ENCODE measurements at regions of chr4 and their contacts with region 1.

Region 1: GRCh38 chr4:140252742-140253555 is 99.0 kb upstream of the MAML3 start:
- DNase-seq: peak; percentile 36 to 70 (median 48)
- H3K4me3 ChIP-seq: peak overlapping the region; percentile 52 to 77 (median 70)
- H3K4me3 Mint-ChIP-seq: peak overlapping the region; percentile 65 to 80
- H3K27ac ChIP-seq: peak overlapping the region in 1 of 2 donors; percentile 74
- H3K27ac Mint-ChIP-seq: peak overlapping the region in 4 of 7 donors; percentile 20 to 81 (median 42)
- H3K4me1 ChIP-seq: peaks cover 22 to 28% of the 10 kb centered on the region in 2 donors
- H3K4me1 Mint-ChIP-seq: peaks cover 55% of the 10 kb centered on the region
- H3K27me3 ChIP-seq: no peaks in the 10 kb centered on the region
- H3K27me3 Mint-ChIP-seq: peaks cover 0 to 6% (median 2%) of the 10 kb centered on the region in 3 donors
- CTCF ChIP-seq: peak; percentile 98

Region 2: DNA sequence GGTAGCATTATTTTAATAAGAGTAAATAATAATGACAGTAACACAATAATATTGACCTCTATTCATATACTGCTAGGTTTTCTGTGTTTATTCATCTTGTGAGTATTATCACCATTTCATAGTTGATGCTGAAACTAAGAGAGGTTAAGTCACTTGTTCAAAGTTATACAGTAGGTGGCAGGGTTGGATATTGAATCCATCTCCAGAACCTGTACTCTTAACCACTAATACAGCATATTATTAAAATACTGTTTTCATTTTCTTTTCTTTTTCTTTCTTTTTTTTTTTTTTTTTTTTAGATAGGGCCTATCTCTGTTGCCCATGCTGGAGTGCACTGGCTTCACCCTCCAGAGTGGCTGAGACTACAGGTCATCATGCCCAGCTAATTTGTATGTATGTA is 1068.8 kb before region 1 on chr4:
- intact Hi-C with region 1: loop called in 1 of 2 experiments (anchors 10 kb)
- DNase-seq: peak in 2 of 3 donors; percentile 28 to 35
- H3K4me3 ChIP-seq: no peak overlapping the region
- H3K4me3 Mint-ChIP-seq: no peak overlapping the region
- H3K27ac ChIP-seq: no peak overlapping the region
- H3K27ac Mint-ChIP-seq: no peak overlapping the region
- H3K4me1 ChIP-seq: peaks cover 20 to 25% of the 10 kb centered on the region in 2 donors
- H3K4me1 Mint-ChIP-seq: peaks cover 19% of the 10 kb centered on the region
- H3K27me3 ChIP-seq: no peaks in the 10 kb centered on the region
- H3K27me3 Mint-ChIP-seq: peaks cover 0 to 3% (median 3%) of the 10 kb centered on the region in 3 donors
- CTCF ChIP-seq: peak; percentile 23

Region 3: DNA sequence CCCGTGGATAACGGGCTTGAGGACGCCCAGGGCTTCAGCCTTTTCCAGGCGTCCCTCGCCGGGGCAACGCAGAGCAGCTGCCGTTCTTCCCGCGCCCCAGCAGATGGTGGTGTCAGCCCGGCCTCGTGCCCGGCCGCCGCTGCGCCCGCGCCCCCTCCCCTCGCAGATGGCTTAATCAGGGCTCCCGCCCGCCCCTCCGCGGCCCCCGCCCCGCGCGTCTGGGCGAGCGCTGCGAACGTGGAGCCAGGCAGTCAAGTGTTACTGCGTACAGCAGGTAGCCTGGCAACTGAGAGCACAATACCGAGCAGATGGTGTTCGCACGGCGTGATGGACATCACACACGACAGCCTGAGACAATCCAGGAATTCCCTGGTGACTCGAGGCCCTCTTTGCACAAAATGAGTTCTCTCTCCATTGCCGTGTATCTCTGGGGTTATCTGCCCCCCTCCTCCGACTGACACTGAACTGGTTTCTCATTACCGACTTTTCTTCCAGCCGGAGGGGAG is 518.0 kb before region 1 on chr4:
- intact Hi-C with region 1: loop called (anchors 5 kb)
- DNase-seq: peak; percentile 74 to 97 (median 78)
- H3K4me3 ChIP-seq: peak overlapping the region; percentile 53 to 81 (median 73)
- H3K4me3 Mint-ChIP-seq: peak overlapping the region; percentile 85 to 92
- H3K27ac ChIP-seq: peak overlapping the region; percentile 34 to 79
- H3K27ac Mint-ChIP-seq: peak overlapping the region; percentile 48 to 94 (median 90)
- H3K4me1 ChIP-seq: peaks cover 40 to 57% of the 10 kb centered on the region in 2 donors
- H3K4me1 Mint-ChIP-seq: peaks cover 51% of the 10 kb centered on the region
- H3K27me3 ChIP-seq: no peaks in the 10 kb centered on the region
- H3K27me3 Mint-ChIP-seq: peaks cover 0 to 1% (median 1%) of the 10 kb centered on the region in 3 donors
- CTCF ChIP-seq: peak; percentile 95

Region 4: DNA sequence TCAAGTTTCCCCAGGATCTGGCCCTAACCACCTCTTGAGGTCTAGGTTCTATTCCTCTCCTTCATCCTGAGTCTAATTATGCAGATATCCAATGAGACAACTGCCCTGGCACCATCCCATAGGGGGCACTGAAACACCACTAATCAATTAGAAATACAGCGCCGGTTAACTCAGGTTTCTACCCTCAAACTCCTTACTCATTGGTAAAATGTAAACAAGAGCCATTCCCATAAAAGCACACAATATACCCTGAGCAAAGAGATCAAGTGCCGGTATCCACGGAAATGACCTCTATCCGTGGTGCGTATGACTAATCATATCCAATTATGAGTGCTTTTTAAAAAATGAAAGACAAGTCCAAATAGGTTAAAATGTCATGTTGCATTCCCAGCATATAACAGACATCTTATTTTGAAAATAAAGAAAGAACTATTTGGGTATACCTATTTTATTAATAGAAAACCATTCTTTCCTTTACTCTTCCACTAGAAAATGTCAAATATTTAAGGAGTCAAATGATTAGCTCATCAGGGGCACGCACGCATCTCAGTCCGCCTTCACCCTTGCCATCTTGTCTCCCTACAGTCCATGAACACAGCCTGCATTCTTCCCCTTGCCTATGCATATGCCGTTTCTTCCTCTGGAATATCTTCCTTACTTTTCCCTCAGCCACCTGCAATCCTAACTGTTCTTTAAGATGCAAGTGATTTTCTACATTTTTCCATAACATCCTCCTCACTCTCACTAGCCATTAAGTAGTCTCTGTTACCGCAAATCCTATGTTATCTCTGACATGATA is 240.1 kb before region 1 on chr4:
- intact Hi-C with region 1: loop called (anchors 5 kb)
- DNase-seq: peak; percentile 37 to 66 (median 63)
- H3K4me3 ChIP-seq: no peak overlapping the region
- H3K4me3 Mint-ChIP-seq: peak overlapping the region in 1 of 2 donors; percentile 35
- H3K27ac ChIP-seq: no peak overlapping the region
- H3K27ac Mint-ChIP-seq: peak overlapping the region in 1 of 7 donors; percentile 39
- H3K4me1 ChIP-seq: peaks cover 6 to 8% of the 10 kb centered on the region in 2 donors
- H3K4me1 Mint-ChIP-seq: peaks cover 9% of the 10 kb centered on the region
- H3K27me3 ChIP-seq: no peaks in the 10 kb centered on the region
- H3K27me3 Mint-ChIP-seq: no peaks in the 10 kb centered on the region
- CTCF ChIP-seq: peak; percentile 72

Region 5: GRCh38 chr4:140153718-140154571 is 99.0 kb before region 1 on chr4 and contains the start of gene MAML3:
- intact Hi-C with region 1: loop called (anchors 2 to 5 kb)
- DNase-seq: peak; percentile 79 to 86 (median 84)
- H3K4me3 ChIP-seq: peak within 1 kb of the TSS; percentile 60 to 91 (median 87)
- H3K4me3 Mint-ChIP-seq: peak within 1 kb of the TSS; percentile 97
- H3K27ac ChIP-seq: peak within 1 kb of the TSS; percentile 88 to 92
- H3K27ac Mint-ChIP-seq: peak within 1 kb of the TSS; percentile 92 to 97 (median 94)
- H3K4me1 ChIP-seq: peaks cover 40 to 50% of the 10 kb centered on the region in 2 donors
- H3K4me1 Mint-ChIP-seq: peaks cover 38% of the 10 kb centered on the region
- H3K27me3 ChIP-seq: no peaks in the 10 kb centered on the region
- H3K27me3 Mint-ChIP-seq: peaks cover 0 to 1% (median 0%) of the 10 kb centered on the region in 3 donors
- CTCF ChIP-seq: no peak
- polyA plus RNA-seq, gene MAML3: 1.5 to 6.5 (median 2.3) TPM

Region 6: DNA sequence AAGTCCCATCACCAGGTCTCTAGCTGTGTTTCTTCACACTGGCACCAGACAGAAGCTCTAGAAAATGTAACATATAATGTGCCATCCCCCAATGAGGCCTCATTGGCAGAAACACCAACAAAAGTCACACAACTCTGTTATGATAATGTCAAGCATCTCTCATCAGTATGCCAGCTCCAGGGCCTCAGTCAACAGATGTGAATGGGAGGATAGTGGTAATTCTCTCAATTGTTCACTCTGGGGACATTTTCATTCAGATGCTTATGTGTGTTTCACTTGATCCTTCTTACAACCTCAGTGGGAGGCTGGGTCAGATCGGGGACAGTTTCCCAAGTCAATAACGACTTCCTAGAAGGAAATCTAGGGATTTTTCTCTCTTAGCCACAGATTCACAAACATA is 63.0 kb after region 1 on chr4:
- intact Hi-C with region 1: no loop called
- DNase-seq: no peak
- H3K4me3 ChIP-seq: no peak overlapping the region
- H3K4me3 Mint-ChIP-seq: no peak overlapping the region
- H3K27ac ChIP-seq: no peak overlapping the region
- H3K27ac Mint-ChIP-seq: no peak overlapping the region
- H3K4me1 ChIP-seq: no peaks in the 10 kb centered on the region
- H3K4me1 Mint-ChIP-seq: no peaks in the 10 kb centered on the region
- H3K27me3 ChIP-seq: no peaks in the 10 kb centered on the region
- H3K27me3 Mint-ChIP-seq: peaks cover 0 to 1% (median 0%) of the 10 kb centered on the region in 3 donors
- CTCF ChIP-seq: no peak